Activated CD4-positive, alpha-beta memory T cell treated with anti-CD3 and anti-CD28 coated beads, Interleukin-2, amount 10 ng/mL, durations not matched to agents 7 days and 5 days (primary cell): ENCODE measurements at regions of chr1 and their contacts with region 1.

Region 1: DNA sequence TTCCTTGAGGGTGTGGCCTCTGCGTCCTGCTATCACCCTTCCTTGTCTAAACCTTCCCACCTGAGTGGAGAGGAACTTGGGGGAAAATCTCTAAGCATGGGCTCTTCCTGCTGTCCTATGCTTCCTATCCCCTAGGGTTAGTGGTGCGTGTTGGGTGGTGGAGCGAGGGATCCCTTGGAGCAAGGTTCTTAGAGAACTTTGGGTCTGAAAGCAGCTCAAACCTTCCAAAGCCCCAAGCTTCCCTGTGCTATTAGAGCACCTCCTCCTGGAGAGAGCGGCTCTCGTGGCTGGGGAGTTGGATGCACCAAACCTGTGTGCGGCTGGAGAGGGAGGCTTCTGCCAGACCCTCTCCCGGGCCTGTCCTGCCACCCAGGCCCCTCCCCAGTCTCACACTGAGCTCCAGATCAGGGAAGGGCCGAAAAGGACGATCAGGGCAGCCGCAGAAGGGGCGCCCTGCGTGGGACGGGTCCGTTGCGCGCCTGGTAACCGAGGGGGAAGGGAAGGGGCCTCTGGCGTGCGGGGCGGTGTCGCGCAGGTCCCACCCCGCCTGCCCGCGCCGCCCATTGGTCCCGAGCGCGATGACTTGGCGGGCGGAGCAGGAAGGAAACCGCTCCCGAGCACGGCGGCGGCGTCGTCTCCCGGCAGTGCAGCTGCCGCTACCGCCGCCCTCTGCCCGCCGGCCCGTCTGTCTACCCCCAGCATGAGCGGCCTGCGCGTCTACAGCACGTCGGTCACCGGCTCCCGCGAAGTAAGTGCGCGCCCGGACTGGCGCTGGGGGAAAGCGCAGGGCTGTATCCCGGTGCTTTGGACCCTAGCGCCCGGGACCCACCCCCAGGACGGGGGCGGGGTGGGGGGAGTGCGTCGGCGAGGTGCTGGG is at the start of gene SH3BGRL3:
- DNase-seq: peak; percentile 90
- H3K4me3 Mint-ChIP-seq: peak within 1 kb of the TSS; percentile 81
- H3K27ac Mint-ChIP-seq: peak within 1 kb of the TSS; percentile 98
- H3K4me1 Mint-ChIP-seq: peaks cover 87% of the 10 kb centered on the region
- H3K27me3 Mint-ChIP-seq: no peaks in the 10 kb centered on the region
- total RNA-seq, gene SH3BGRL3: 662 to 665 TPM

Region 2: DNA sequence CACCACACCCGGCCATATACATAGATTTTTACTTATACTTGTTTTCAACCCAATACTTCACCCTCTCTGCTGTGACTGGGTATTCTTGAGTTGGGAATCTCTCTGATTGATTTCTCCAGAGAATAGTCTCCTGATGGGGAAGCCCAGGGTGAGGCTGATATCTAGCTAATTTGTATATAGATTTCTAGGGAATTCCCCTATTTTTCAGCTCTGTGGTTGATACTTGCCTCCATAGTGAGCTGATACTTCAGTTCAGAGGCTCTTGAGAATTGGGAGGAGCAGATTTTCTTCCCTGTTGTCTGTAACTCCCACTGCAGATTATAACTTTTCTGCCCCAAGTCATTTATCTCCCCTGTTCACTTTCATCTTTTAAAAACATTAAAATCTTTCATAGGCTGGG is 14.3 kb before region 1 on chr1:
- CTCF ChIA-PET with region 1: interaction called, 12 read pairs
- POLR2A ChIA-PET with region 1: interaction called, 4 read pairs
- DNase-seq: no peak
- H3K4me3 Mint-ChIP-seq: no peak overlapping the region
- H3K27ac Mint-ChIP-seq: no peak overlapping the region
- H3K4me1 Mint-ChIP-seq: no peaks in the 10 kb centered on the region
- H3K27me3 Mint-ChIP-seq: no peaks in the 10 kb centered on the region

Region 3: DNA sequence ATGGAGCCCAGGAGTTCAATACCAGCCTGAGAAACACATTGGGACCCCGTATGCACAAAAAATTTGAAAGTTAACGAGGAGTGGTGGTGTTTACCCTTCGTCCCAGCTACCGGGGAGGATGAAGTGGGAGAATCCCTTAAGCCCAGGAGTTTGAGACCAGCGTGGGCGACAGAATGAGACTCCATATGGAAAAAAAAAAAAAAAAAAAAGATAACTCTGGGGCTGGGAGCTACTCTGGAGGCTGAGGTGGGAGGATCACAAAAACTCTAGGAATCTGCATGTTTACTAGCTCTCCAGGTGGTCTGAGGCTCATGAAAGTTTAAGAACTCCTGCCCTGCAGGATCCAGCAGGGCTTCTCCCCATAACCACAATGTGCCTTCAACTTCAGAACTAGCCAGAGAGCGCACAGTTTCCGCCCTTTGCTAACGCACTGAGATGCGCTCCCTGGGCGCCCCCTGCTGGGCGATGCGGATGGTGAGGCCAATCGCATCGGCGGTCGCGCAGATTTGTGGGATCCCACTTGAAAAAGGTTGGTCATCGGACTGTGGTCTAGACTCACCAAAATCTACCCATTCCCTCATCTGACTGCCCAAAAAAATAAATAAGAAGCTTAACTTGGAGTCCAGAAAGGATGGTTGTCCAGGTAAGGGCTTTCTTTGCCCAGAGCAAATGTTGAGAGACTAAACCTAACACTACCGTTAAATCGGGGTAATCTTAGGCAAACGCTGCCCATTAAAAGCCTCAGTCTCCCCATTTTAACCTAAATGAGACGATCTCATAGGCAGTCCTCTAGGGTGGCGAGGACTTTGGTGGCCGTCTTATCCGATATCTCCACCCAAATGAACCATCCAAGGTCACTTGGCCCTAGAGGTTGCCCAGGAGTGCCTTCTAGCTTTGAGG is 84.1 kb after region 1 on chr1:
- CTCF ChIA-PET with region 1: interaction called, 67 read pairs
- POLR2A ChIA-PET with region 1: interaction called, 28 read pairs
- DNase-seq: peak; percentile 88
- H3K4me3 Mint-ChIP-seq: no peak overlapping the region
- H3K27ac Mint-ChIP-seq: no peak overlapping the region
- H3K4me1 Mint-ChIP-seq: peaks cover 49% of the 10 kb centered on the region
- H3K27me3 Mint-ChIP-seq: peaks cover 23% of the 10 kb centered on the region

Region 4: DNA sequence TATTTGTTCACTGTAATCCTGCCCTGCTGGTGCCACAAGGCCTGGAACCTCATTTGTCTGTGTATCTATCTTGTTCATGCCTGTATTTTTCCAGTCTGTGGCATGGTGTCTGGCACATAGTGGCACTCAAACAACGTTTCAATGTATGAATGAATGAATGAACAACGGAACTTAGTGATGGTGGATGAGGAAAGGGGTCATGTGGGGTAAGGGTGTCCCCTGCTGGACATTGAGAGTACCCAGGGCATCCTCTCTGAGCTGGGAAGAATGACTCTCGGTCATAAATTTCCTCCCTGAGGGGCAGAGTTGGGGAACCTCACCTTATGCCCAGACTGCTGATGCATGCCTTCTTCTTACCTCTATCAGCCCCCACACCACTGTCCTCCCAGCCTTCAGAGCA is 111.8 kb after region 1 on chr1:
- CTCF ChIA-PET with region 1: interaction called, 31 read pairs
- POLR2A ChIA-PET with region 1: interaction called, 12 read pairs
- DNase-seq: peak; percentile 74
- H3K4me3 Mint-ChIP-seq: no peak overlapping the region
- H3K27ac Mint-ChIP-seq: no peak overlapping the region
- H3K4me1 Mint-ChIP-seq: peaks cover 43% of the 10 kb centered on the region
- H3K27me3 Mint-ChIP-seq: peaks cover 7% of the 10 kb centered on the region

Region 5: DNA sequence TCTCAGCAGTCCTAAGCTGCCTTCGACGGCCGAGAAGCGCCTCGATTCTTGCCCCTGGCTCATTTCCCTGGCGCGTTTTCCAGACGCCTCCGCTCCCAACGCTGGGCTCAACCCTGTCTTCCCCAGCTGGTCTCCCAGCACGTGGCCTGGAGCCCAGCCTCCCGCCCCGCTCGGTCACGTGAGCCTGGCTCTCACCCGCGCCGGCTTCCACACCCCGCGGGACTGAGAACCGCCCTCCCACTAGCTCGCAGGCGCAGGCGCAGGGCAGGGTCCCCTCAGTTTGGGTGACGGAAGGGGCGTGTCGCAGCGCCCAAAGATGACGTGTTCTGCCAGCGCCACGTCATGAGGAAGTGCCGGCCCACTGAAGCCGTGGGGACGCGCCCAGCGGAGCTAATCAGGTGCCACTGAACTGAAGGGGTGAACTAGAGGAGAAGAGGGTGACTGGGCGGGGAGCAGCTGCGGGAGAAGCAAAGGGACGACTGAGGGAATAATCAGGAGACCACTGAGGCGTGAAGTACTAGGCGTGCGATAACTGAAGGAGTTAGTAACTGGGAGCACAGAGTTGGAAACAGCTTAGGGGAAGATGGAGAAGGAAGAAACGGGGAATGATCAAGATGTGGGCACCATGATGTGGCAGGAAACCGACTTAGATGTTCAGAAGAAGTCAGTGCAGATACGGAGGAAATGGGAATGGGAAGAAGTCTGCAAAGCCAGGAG is 152.4 kb after region 1 on chr1 and contains the start of gene DHDDS:
- CTCF ChIA-PET with region 1: interaction called, 4 read pairs
- POLR2A ChIA-PET with region 1: interaction called, 10 read pairs
- DNase-seq: peak; percentile 99
- H3K4me3 Mint-ChIP-seq: peak within 1 kb of the TSS; percentile 98
- H3K27ac Mint-ChIP-seq: peak within 1 kb of the TSS; percentile 92
- H3K4me1 Mint-ChIP-seq: peaks cover 24% of the 10 kb centered on the region
- H3K27me3 Mint-ChIP-seq: peaks cover 4% of the 10 kb centered on the region
- total RNA-seq, gene DHDDS: 49.7 to 52.3 TPM